ENCODE measurements at regions of chr1 and their contacts with region 1.

Region 1: DNA sequence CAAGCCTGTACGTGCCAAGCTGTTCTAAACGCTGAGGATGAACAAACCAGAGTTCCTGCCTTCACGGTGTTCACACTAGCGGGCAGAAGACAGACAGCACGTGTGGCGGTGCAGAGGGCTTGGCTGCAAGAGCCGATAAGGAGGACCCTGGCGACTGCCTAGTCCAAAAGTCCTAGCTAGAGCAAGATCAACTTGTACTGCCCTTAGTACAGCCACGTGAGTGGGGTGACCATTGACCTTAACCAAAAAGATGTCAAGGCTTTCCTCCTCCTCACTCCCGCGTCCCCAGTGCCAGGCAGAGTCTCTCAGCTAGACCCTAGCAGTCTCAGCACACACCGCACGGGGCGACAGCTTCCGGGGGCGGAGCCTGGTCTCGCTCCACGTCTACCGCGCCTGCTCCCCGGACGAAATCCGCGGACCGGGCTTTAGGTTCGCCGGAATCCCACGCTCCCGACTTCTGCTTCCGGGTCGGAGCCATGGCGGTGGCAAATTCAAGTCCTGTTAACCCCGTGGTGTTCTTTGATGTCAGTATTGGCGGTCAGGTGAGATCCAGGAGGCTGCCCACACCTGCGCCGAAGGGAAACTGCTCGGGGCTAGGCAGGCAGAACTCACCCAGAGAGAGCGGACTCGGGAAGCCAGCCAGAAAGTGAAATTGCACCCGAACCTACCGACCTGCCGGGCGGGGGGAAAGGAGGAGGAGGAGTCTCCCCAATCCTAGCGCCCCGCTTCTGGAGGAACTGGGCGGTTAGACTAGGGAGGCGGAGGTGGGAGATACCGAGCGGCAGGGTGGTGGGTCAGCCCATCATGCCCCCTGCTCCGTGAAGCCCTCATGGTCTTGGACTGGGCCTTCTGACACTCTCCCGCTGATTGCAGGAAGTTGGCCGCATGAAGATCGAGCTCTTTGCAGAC is at the start of gene PPIH:
- DNase-seq: peak; percentile 97
- H3K4me3 Mint-ChIP-seq: peak within 1 kb of the TSS; percentile 98
- H3K27ac Mint-ChIP-seq: peak within 1 kb of the TSS; percentile 95
- H3K4me1 Mint-ChIP-seq: peaks cover 37% of the 10 kb centered on the region
- H3K27me3 Mint-ChIP-seq: no peaks in the 10 kb centered on the region
- total RNA-seq, gene PPIH: 91.0 to 94.0 TPM

Region 2: GRCh38 chr1:42462828-42463763 is 195.1 kb before region 1 on chr1 and contains the start of gene CCDC30:
- CTCF ChIA-PET with region 1: no interaction called
- POLR2A ChIA-PET with region 1: interaction called, 3 read pairs
- intact Hi-C with region 1: loop called (anchors 2 kb)
- DNase-seq: peak; percentile 98
- H3K4me3 Mint-ChIP-seq: peak within 1 kb of the TSS; percentile 79
- H3K27ac Mint-ChIP-seq: peak within 1 kb of the TSS; percentile 73
- H3K4me1 Mint-ChIP-seq: peaks cover 31% of the 10 kb centered on the region
- H3K27me3 Mint-ChIP-seq: no peaks in the 10 kb centered on the region
- total RNA-seq, gene CCDC30: 1.5 to 2.3 TPM

Region 3: GRCh38 chr1:42681741-42682483 is 23.7 kb after region 1 on chr1 and contains the start of gene YBX1:
- CTCF ChIA-PET with region 1: interaction called, 8 read pairs
- POLR2A ChIA-PET with region 1: interaction called, 29 read pairs
- intact Hi-C with region 1: loop called (anchors 1 kb)
- DNase-seq: peak; percentile 97
- H3K4me3 Mint-ChIP-seq: peak within 1 kb of the TSS; percentile 93
- H3K27ac Mint-ChIP-seq: peak within 1 kb of the TSS; percentile 97
- H3K4me1 Mint-ChIP-seq: peaks cover 45% of the 10 kb centered on the region
- H3K27me3 Mint-ChIP-seq: no peaks in the 10 kb centered on the region
- total RNA-seq, gene YBX1: 1,101 to 1,134 TPM

Region 4: GRCh38 chr1:42846257-42847110 is 188.3 kb after region 1 on chr1 and contains the start of gene ZNF691:
- CTCF ChIA-PET with region 1: interaction called, 6 read pairs
- POLR2A ChIA-PET with region 1: no interaction called
- intact Hi-C with region 1: loop called (anchors 5 kb)
- DNase-seq: peak; percentile 94
- H3K4me3 Mint-ChIP-seq: peak within 1 kb of the TSS; percentile 89
- H3K27ac Mint-ChIP-seq: peak within 1 kb of the TSS; percentile 72
- H3K4me1 Mint-ChIP-seq: peaks cover 44% of the 10 kb centered on the region
- H3K27me3 Mint-ChIP-seq: no peaks in the 10 kb centered on the region
- total RNA-seq, gene ZNF691: 8.6 to 9.5 TPM

Measured in activated CD4-positive, alpha-beta memory T cell treated with anti-CD3 and anti-CD28 coated beads for 36 hours (primary cell).